ENCODE measurements at regions of chr20 and their contacts with region 1.

Region 1: GRCh38 chr20:5001174-5002076 is at the start of gene SLC23A2:
- DNase-seq: peak; percentile 45 to 60
- H3K4me3 ChIP-seq: peak within 1 kb of the TSS; percentile 93
- H3K27ac ChIP-seq: peak within 1 kb of the TSS; percentile 45
- H3K4me1 ChIP-seq: peaks cover 19% of the 10 kb centered on the region
- H3K27me3 ChIP-seq: no peaks in the 10 kb centered on the region
- CTCF ChIP-seq: no peak
- total RNA-seq, gene SLC23A2: 20.4 and 22.3 TPM in 2 replicates

Region 2: GRCh38 chr20:5072756-5073659 is 71.6 kb after region 1 on chr20:
- CTCF ChIA-PET with region 1: no interaction called
- POLR2A ChIA-PET with region 1: no interaction called
- intact Hi-C with region 1: loop called (anchors 5 kb)
- DNase-seq: peak; percentile 97 to 99
- H3K4me3 ChIP-seq: no peak overlapping the region
- H3K27ac ChIP-seq: peak overlapping the region; percentile 89
- H3K4me1 ChIP-seq: peaks cover 31% of the 10 kb centered on the region
- H3K27me3 ChIP-seq: no peaks in the 10 kb centered on the region
- CTCF ChIP-seq: no peak

Measured in PC-9 (cell line).